Heart right ventricle (tissue), 16 donors: ENCODE measurements at regions of chr14 and their contacts with region 1.

Region 1: DNA sequence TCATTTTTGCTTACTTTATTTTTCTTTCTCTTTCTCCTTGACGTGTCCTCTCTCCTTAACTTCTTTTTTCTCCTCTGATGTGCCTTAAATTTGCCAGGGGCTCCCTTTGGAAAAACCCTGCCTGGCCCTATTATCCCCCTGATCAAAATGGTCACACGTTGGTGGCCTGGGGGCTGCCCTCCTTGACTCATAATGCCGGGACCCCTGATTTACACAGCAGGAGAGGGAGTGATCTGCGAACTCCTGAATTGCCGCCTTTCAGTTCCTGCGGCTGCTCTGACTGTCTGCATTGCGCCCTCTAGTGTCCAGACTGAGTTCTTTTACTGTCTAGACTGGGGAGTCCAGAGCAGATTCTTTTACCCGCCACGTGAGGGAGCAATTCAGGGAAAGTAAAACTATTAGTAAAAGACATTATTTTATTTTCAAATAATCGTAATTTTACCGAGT is 44.8 kb upstream of the GZMB start:
- DNase-seq: peak; percentile 33 to 87
- ATAC-seq: peak; percentile 89 to 95 (median 93)
- H3K4me3 ChIP-seq: peak overlapping the region in 8 of 10 donors; percentile 2 to 46 (median 40)
- H3K27ac ChIP-seq: peak overlapping the region in 8 of 10 donors; percentile 9 to 74 (median 28)
- H3K4me1 ChIP-seq: peaks cover 0 to 44% (median 5%) of the 10 kb centered on the region in 9 donors
- H3K27me3 ChIP-seq: no peaks in the 10 kb centered on the region
- CTCF ChIP-seq: peak; percentile 86 to 99 (median 98)

Region 2: DNA sequence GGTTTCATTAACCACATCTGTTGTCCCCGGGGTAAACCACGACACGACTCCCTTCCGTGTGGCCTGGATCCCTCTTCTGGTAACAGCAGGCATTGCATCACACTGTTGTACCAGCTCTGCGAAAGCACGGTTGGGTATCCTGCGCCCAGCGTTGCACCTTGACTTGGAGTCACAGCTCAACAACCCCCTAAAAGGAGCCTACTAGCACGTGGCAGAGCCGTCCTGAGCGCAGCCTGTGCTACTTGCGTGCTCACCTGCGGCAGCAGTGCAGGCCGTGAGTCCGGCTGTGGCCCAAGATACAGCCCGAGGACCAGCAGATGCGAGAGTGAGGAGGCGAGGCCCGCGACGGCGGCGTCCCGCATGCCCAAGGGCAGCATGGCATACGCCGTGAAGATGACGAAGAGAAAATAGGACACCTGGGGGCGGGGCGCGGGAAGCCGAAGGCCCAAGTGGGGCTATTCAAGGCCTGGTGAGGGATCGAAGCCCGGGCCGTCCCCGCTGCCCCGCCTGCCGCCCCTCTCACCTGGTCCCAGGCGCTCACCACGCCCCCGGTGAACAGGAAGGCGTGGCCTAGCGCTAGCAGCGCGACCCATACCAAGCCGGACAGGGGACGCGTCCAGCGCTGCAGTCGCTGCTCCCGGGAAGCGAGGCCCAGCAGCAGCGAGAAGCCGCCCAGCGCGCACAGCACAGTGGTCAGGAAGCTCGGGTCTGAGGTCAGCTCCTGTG is 346.4 kb before region 1 on chr14:
- intact Hi-C with region 1: loop called in 1 of 10 experiments (anchors 5 kb)
- DNase-seq: peak; percentile 43 to 68
- ATAC-seq: peak in 7 of 8 donors; percentile 31 to 56 (median 51)
- H3K4me3 ChIP-seq: peak overlapping the region in 9 of 10 donors; percentile 14 to 88 (median 70)
- H3K27ac ChIP-seq: peak overlapping the region in 3 of 10 donors; percentile 15 to 97 (median 90)
- H3K4me1 ChIP-seq: peaks cover 6 to 92% (median 37%) of the 10 kb centered on the region in 9 donors
- H3K27me3 ChIP-seq: peaks cover 0 to 35% (median 24%) of the 10 kb centered on the region in 7 donors
- CTCF ChIP-seq: peak; percentile 43 to 75 (median 68)

Region 3: GRCh38 chr14:24481622-24482324 is 197.1 kb before region 1 on chr14:
- intact Hi-C with region 1: loop called in 2 of 10 experiments (anchors 10 kb)
- DNase-seq: peak in 1 of 2 donors; percentile 29
- ATAC-seq: peak in 7 of 8 donors; percentile 47 to 78 (median 55)
- H3K4me3 ChIP-seq: no peak overlapping the region
- H3K27ac ChIP-seq: no peak overlapping the region
- H3K4me1 ChIP-seq: no peaks in the 10 kb centered on the region
- H3K27me3 ChIP-seq: no peaks in the 10 kb centered on the region
- CTCF ChIP-seq: peak; percentile 23 to 63 (median 58)

Region 4: DNA sequence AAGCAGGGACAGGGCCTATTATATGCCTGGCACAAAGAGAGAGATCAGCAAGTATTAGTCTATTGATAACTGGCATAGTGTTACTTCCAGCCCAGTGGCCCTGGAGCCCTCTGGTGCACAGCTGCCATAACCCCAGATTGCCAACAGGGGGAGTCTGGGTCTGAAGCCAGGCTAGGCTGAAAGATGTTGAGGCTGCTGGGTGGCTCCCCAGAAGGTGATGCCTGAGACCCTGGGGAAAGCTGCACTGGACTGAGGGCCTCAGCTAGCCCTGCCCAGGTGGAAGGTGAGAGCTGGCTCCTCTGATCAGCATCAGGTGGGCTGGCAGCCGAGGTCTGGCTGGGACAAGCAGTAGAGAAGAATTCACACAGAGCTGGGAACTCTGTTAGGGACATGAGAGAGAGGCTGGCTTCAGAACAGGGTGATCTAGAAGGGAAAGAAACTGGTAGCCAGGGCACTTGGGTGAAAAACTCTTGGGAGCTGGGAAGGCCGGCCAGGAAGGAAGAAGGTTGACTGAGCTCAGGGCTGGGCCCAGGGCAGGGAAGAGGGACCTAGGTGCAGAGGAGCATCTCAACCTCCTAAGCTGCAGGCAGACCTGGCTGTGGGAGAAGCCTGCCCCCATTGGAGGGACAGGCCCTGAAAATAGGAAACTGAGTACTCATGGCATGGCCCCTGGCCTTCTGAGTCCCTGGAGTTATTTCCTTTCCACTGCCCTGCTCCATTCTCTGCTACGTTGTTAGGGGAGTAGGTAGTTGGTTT is 73.2 kb before region 1 on chr14:
- intact Hi-C with region 1: loop called in 3 of 10 experiments (anchors 2 to 5 kb)
- DNase-seq: peak in 1 of 2 donors; percentile 19
- ATAC-seq: no peak
- H3K4me3 ChIP-seq: no peak overlapping the region
- H3K27ac ChIP-seq: peak overlapping the region in 1 of 10 donors; percentile 44
- H3K4me1 ChIP-seq: peaks cover 0 to 14% (median 0%) of the 10 kb centered on the region in 9 donors
- H3K27me3 ChIP-seq: no peaks in the 10 kb centered on the region
- CTCF ChIP-seq: peak; percentile 32 to 88 (median 59)